Activated CD4-positive, alpha-beta memory T cell treated with anti-CD3 and anti-CD28 coated beads, Interleukin-2, amount 10 ng/mL, durations not matched to agents 7 days and 5 days (primary cell): ENCODE measurements at regions of chr1 and their contacts with region 1.

Region 1: GRCh38 chr1:193539731-193540459 is 353.5 kb upstream of the B3GALT2 start:
- DNase-seq: peak; percentile 44
- H3K4me3 Mint-ChIP-seq: peak overlapping the region; percentile 71
- H3K27ac Mint-ChIP-seq: peak overlapping the region; percentile 93
- H3K4me1 Mint-ChIP-seq: peaks cover 60% of the 10 kb centered on the region
- H3K27me3 Mint-ChIP-seq: no peaks in the 10 kb centered on the region

Region 2: GRCh38 chr1:193183019-193183627 is 356.8 kb before region 1 on chr1:
- CTCF ChIA-PET with region 1: no interaction called
- POLR2A ChIA-PET with region 1: interaction called, 26 read pairs
- DNase-seq: no peak
- H3K4me3 Mint-ChIP-seq: peak overlapping the region; percentile 59
- H3K27ac Mint-ChIP-seq: no peak overlapping the region
- H3K4me1 Mint-ChIP-seq: peaks cover 21% of the 10 kb centered on the region
- H3K27me3 Mint-ChIP-seq: no peaks in the 10 kb centered on the region

Region 3: GRCh38 chr1:193462629-193463320 is 77.1 kb before region 1 on chr1:
- CTCF ChIA-PET with region 1: no interaction called
- POLR2A ChIA-PET with region 1: interaction called, 60 read pairs
- DNase-seq: no peak
- H3K4me3 Mint-ChIP-seq: peak overlapping the region; percentile 49
- H3K27ac Mint-ChIP-seq: peak overlapping the region; percentile 78
- H3K4me1 Mint-ChIP-seq: peaks cover 50% of the 10 kb centered on the region
- H3K27me3 Mint-ChIP-seq: no peaks in the 10 kb centered on the region

Region 4: GRCh38 chr1:193486671-193487229 is 53.1 kb before region 1 on chr1:
- CTCF ChIA-PET with region 1: no interaction called
- POLR2A ChIA-PET with region 1: interaction called, 121 read pairs
- DNase-seq: no peak
- H3K4me3 Mint-ChIP-seq: no peak overlapping the region
- H3K27ac Mint-ChIP-seq: peak overlapping the region; percentile 44
- H3K4me1 Mint-ChIP-seq: peaks cover 35% of the 10 kb centered on the region
- H3K27me3 Mint-ChIP-seq: no peaks in the 10 kb centered on the region

Region 5: GRCh38 chr1:193504920-193505319 is 35.0 kb before region 1 on chr1:
- CTCF ChIA-PET with region 1: no interaction called
- POLR2A ChIA-PET with region 1: no interaction called
- DNase-seq: no peak
- H3K4me3 Mint-ChIP-seq: no peak overlapping the region
- H3K27ac Mint-ChIP-seq: no peak overlapping the region
- H3K4me1 Mint-ChIP-seq: peaks cover 9% of the 10 kb centered on the region
- H3K27me3 Mint-ChIP-seq: no peaks in the 10 kb centered on the region

Region 6: GRCh38 chr1:193558491-193559028 is 18.7 kb after region 1 on chr1:
- CTCF ChIA-PET with region 1: no interaction called
- POLR2A ChIA-PET with region 1: interaction called, 19 read pairs
- DNase-seq: peak; percentile 20
- H3K4me3 Mint-ChIP-seq: no peak overlapping the region
- H3K27ac Mint-ChIP-seq: peak overlapping the region; percentile 58
- H3K4me1 Mint-ChIP-seq: peaks cover 13% of the 10 kb centered on the region
- H3K27me3 Mint-ChIP-seq: no peaks in the 10 kb centered on the region